Panc1 (cell line): ENCODE measurements at regions of chr14 and their contacts with region 1.

Region 1: DNA sequence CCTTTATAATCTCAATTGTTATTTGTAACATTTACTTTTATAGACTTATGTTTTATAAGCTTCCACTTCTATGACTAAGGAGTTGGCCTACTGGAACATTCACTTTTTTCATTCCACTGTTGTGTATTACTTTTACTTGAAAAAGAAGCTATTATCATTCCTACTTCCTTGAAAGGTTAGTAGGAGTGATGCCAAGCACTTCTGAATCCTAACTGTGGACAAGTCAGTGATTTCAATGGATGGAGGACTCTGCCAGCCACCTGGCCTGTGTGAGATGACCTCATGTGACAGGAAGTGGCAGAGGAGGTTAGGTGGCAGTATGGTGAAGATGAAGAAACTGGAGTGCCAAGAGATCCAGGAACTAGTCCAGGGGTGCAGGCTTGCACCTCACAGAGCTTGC is 46.0 kb downstream of the TECPR2 start:
- DNase-seq: no peak
- ATAC-seq: no peak
- H3K4me3 ChIP-seq: no peak overlapping the region
- H3K27ac ChIP-seq: no peak overlapping the region
- H3K4me1 ChIP-seq: no peaks in the 10 kb centered on the region
- H3K27me3 ChIP-seq: no peaks in the 10 kb centered on the region
- CTCF ChIP-seq: no peak

Region 2: DNA sequence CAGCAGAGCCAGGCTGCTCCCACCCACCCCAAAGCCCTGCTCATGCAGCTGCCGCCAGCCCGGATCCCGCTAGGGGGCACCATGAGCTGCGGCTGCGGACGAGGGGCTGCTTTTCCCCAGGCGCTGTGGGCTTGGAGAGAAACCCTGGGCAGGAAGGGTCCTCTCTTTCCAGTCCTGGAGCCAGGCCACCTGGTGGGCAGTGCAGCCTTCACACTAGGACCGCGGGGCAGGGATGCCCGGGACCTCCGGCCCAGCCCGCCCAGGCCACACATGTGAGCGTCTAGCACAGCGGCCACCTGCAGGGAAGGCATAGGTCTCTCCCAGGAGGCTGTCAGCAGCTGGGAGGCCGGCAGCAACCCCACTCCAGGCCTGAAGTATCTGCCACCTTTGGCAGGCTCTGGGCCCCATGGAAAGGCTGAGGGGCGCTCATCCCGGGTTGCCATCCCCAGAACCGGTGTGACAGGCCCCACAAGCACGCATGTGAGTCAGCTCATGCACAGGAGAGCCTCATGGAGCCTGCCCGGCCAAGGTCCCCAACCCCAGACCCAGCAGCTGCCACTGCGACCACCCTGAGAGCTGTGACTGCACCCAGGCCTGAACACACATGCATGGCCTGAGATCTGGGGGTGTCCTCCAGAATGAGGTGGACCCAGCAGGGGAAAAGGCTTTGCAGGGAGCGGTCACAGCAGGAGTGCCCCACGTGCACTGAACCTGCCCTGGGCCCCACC is 1225.2 kb before region 1 on chr14:
- CTCF ChIA-PET with region 1: no interaction called
- POLR2A ChIA-PET with region 1: no interaction called
- in situ Hi-C with region 1: no loop called
- intact Hi-C with region 1: no loop called
- DNase-seq: no peak
- ATAC-seq: no peak
- H3K4me3 ChIP-seq: no peak overlapping the region
- H3K27ac ChIP-seq: no peak overlapping the region
- H3K4me1 ChIP-seq: no peaks in the 10 kb centered on the region
- H3K27me3 ChIP-seq: no peaks in the 10 kb centered on the region
- CTCF ChIP-seq: no peak; the same call in 1 of the 2 replicates

Region 3: DNA sequence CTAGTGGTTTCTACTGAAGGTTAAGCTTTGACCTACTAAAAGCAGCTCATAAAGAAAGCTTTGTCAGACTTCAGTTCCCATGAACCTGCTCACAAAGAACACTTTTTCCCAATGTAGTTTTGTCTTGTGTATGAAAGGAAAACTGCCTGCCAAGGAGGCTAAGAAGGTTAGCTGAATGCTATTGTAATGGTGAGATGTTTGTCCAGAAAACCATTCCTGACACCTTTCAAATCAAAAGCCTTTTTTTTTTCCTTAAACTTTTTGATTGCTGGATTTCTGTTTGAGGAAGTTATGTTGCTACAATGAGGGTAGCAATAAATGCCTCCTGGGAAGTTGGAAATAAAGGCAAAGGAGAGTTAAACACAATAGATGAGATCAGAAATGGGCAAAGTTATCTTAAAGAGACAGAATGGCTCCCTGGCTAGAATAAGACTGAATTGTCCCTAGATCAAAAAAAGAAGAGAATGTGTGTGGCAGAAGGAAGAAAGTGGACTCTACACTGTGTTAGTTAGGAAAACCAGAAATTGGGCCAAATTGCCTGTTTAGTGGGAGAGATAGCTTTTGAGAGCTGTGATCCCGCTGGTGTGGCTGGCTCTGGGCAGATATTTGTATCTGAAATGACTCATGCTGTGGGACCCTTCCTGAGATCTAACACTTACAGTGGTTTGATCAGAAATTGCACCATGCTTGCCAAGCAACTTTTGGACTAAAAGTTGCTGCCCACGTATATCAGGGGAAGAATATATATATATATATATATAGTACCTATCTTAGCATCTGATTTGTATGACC is 18.5 kb before region 1 on chr14:
- CTCF ChIA-PET with region 1: no interaction called
- POLR2A ChIA-PET with region 1: no interaction called
- in situ Hi-C with region 1: no loop called
- intact Hi-C with region 1: no loop called
- DNase-seq: no peak
- ATAC-seq: no peak
- H3K4me3 ChIP-seq: no peak overlapping the region
- H3K27ac ChIP-seq: no peak overlapping the region
- H3K4me1 ChIP-seq: no peaks in the 10 kb centered on the region
- H3K27me3 ChIP-seq: no peaks in the 10 kb centered on the region
- CTCF ChIP-seq: no peak

Region 4: GRCh38 chr14:102610968-102611811 is 202.5 kb after region 1 on chr14:
- CTCF ChIA-PET with region 1: no interaction called
- POLR2A ChIA-PET with region 1: interaction called, 12 read pairs
- in situ Hi-C with region 1: no loop called
- intact Hi-C with region 1: no loop called
- DNase-seq: no peak
- ATAC-seq: no peak
- H3K4me3 ChIP-seq: no peak overlapping the region
- H3K27ac ChIP-seq: no peak overlapping the region
- H3K4me1 ChIP-seq: no peaks in the 10 kb centered on the region
- H3K27me3 ChIP-seq: no peaks in the 10 kb centered on the region
- CTCF ChIP-seq: no peak